K562 (cell line): ENCODE measurements at regions of chr4 and their contacts with region 1.

Region 1: GRCh38 chr4:138090150-138090917 is 151.8 kb downstream of the SLC7A11 start:
- DNase-seq: peak; percentile 60 to 72 (median 64)
- ATAC-seq: peak; percentile 91
- H3K4me3 ChIP-seq: no peak overlapping the region
- H3K27ac ChIP-seq: no peak overlapping the region
- H3K4me1 ChIP-seq: no peaks in the 10 kb centered on the region
- H3K27me3 ChIP-seq: no peaks in the 10 kb centered on the region; a peak in 1 of 5 replicates
- CTCF ChIP-seq: peak; percentile 60 to 79 (median 72)
- EP300 ChIP-seq: no peak
- POLR2A ChIP-seq: no peak
- RAD21 ChIP-seq: peak; percentile 48 to 76

Region 2: GRCh38 chr4:137735561-137736104 is 354.7 kb before region 1 on chr4:
- CTCF ChIA-PET with region 1: no interaction called
- POLR2A ChIA-PET with region 1: no interaction called
- in situ Hi-C with region 1: no loop called
- intact Hi-C with region 1: loop called (anchors 1 kb)
- DNase-seq: no peak
- ATAC-seq: peak; percentile 27; the same call in 1 of the 3 replicates
- H3K4me3 ChIP-seq: no peak overlapping the region
- H3K27ac ChIP-seq: no peak overlapping the region
- H3K4me1 ChIP-seq: peaks cover 0 to 6% of the 10 kb centered on the region in 2 experiments; a peak in 1 of 5 replicates
- H3K27me3 ChIP-seq: no peaks in the 10 kb centered on the region
- CTCF ChIP-seq: no peak
- EP300 ChIP-seq: no peak
- POLR2A ChIP-seq: no peak
- RAD21 ChIP-seq: no peak

Region 3: GRCh38 chr4:137819964-137820383 is 270.4 kb before region 1 on chr4:
- CTCF ChIA-PET with region 1: no interaction called
- POLR2A ChIA-PET with region 1: no interaction called
- in situ Hi-C with region 1: no loop called
- intact Hi-C with region 1: loop called (anchors 2 kb)
- DNase-seq: peak in 2 of 4 experiments; percentile 6 to 22
- ATAC-seq: peak; percentile 78
- H3K4me3 ChIP-seq: no peak overlapping the region
- H3K27ac ChIP-seq: no peak overlapping the region
- H3K4me1 ChIP-seq: no peaks in the 10 kb centered on the region
- H3K27me3 ChIP-seq: no peaks in the 10 kb centered on the region
- CTCF ChIP-seq: peak; percentile 28 to 46 (median 29); a peak in 3 of 6 replicates
- EP300 ChIP-seq: no peak
- POLR2A ChIP-seq: no peak
- RAD21 ChIP-seq: peak; percentile 40 to 58

Region 4: GRCh38 chr4:138522366-138522765 is 432.0 kb after region 1 on chr4:
- CTCF ChIA-PET with region 1: no interaction called
- POLR2A ChIA-PET with region 1: no interaction called
- in situ Hi-C with region 1: no loop called
- intact Hi-C with region 1: loop called (anchors 5 kb)
- DNase-seq: peak in 2 of 4 experiments; percentile 24 to 29
- ATAC-seq: peak; percentile 90
- H3K4me3 ChIP-seq: no peak overlapping the region
- H3K27ac ChIP-seq: no peak overlapping the region
- H3K4me1 ChIP-seq: no peaks in the 10 kb centered on the region
- H3K27me3 ChIP-seq: no peaks in the 10 kb centered on the region
- CTCF ChIP-seq: peak; percentile 35 to 65 (median 59); a peak in 4 of 6 replicates
- EP300 ChIP-seq: no peak
- POLR2A ChIP-seq: no peak
- RAD21 ChIP-seq: peak; percentile 48 to 70